ENCODE measurements at regions of chr1 and their contacts with region 1.

Region 1: DNA sequence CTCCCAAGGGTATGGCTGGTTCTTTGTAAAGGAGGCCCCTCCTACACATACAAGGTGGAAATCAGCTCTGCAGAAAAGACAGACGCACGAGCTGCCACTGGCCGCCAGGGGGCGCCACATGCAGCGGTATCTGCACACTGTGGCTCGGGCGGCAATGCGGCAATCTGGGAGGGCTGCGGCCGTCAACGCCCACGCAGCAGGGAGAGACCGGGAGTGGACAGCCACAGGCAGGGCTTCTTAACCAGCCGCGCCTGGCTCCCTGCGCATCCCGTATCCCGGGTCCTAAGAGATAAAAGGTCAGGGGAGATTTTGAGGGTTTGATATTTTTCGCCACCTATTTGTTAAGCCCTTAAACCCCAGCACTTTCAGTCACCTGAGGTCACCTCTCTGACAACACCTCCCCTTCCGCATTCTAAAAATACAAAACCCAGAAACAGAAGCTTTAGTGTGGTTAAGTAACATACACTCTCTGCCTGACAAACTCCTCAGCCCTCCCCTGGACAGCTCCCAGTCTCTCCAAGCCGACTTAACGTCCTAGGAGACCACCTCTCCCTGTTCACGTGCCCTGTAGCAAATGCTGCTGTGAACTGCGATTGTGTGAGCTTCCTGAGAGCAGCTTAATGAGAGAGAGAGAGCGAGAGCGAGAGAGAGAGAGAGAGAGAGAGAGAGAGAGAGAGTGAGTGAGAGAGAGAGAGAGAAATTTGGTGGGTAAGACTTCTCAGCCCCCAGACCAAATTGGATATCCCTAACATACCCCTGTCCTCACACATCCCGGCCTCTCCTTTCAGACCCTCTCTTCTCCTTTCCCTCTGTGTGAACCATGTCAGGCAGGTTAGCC is 13.5 kb upstream of the KCNA2 start:
- DNase-seq: peak; percentile 54
- ATAC-seq: peak; percentile 94
- H3K4me3 ChIP-seq: no peak overlapping the region
- H3K27ac ChIP-seq: no peak overlapping the region
- H3K4me1 ChIP-seq: no peaks in the 10 kb centered on the region
- H3K27me3 ChIP-seq: peaks cover 0 to 17% of the 10 kb centered on the region in 2 experiments; a peak in 3 of 5 replicates
- CTCF ChIP-seq: peak; percentile 89
- EP300 ChIP-seq: no peak
- POLR2A ChIP-seq: no peak
- RAD21 ChIP-seq: peak; percentile 45; the same call in 1 of the 2 replicates

Region 2: GRCh38 chr1:110524311-110525251 is 95.0 kb before region 1 on chr1:
- CTCF ChIA-PET with region 1: interaction called, 8 read pairs
- POLR2A ChIA-PET with region 1: no interaction called
- in situ Hi-C with region 1: no loop called
- intact Hi-C with region 1: loop called (anchors 10 kb)
- DNase-seq: peak; percentile 21
- ATAC-seq: peak; percentile 87
- H3K4me3 ChIP-seq: no peak overlapping the region; a peak in 1 of 6 replicates
- H3K27ac ChIP-seq: no peak overlapping the region
- H3K4me1 ChIP-seq: no peaks in the 10 kb centered on the region
- H3K27me3 ChIP-seq: no peaks in the 10 kb centered on the region; a peak in 1 of 5 replicates
- CTCF ChIP-seq: peak; percentile 80
- EP300 ChIP-seq: no peak
- POLR2A ChIP-seq: no peak
- RAD21 ChIP-seq: peak; percentile 38

Region 3: GRCh38 chr1:110554871-110555801 is 64.5 kb before region 1 on chr1:
- CTCF ChIA-PET with region 1: interaction called, 15 read pairs
- POLR2A ChIA-PET with region 1: no interaction called
- in situ Hi-C with region 1: loop called (anchors 5 kb)
- intact Hi-C with region 1: loop called (anchors 1 kb)
- DNase-seq: peak; percentile 11
- ATAC-seq: peak; percentile 95
- H3K4me3 ChIP-seq: peak overlapping the region in 2 of 3 experiments; percentile 28 to 61; a peak in 2 of 6 replicates
- H3K27ac ChIP-seq: no peak overlapping the region
- H3K4me1 ChIP-seq: no peaks in the 10 kb centered on the region
- H3K27me3 ChIP-seq: peaks cover 4 to 25% of the 10 kb centered on the region in 2 experiments; a peak in 4 of 5 replicates
- CTCF ChIP-seq: peak; percentile 76
- EP300 ChIP-seq: no peak
- POLR2A ChIP-seq: no peak
- RAD21 ChIP-seq: peak; percentile 63

Region 4: DNA sequence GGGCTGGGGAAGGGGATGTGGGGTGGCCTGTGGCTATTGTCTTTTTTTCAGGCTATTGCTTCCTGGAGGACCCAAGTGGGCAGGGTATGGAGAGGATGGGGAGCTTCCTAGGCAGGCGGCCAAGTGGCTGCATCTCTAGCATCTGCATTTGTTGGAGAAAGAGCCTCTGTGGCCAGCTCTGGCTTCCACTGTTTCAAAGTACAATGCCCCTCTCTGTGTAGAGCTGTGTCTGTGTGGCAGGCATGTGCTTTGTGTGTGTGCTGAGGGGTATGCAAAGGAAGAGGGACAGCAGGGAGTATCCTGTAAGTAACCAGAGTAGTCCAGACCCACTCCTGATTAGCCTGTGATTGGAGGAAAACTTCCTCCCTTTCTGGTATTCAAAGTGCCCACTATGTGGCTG is 54.1 kb before region 1 on chr1:
- CTCF ChIA-PET with region 1: no interaction called
- POLR2A ChIA-PET with region 1: no interaction called
- in situ Hi-C with region 1: no loop called
- intact Hi-C with region 1: no loop called
- DNase-seq: no peak
- ATAC-seq: no peak
- H3K4me3 ChIP-seq: no peak overlapping the region
- H3K27ac ChIP-seq: no peak overlapping the region
- H3K4me1 ChIP-seq: no peaks in the 10 kb centered on the region
- H3K27me3 ChIP-seq: peaks cover 2 to 15% of the 10 kb centered on the region in 2 experiments; a peak in 3 of 5 replicates
- CTCF ChIP-seq: no peak
- EP300 ChIP-seq: no peak
- POLR2A ChIP-seq: no peak
- RAD21 ChIP-seq: no peak

Region 5: GRCh38 chr1:110645821-110646735 is 26.4 kb after region 1 on chr1:
- CTCF ChIA-PET with region 1: no interaction called
- POLR2A ChIA-PET with region 1: no interaction called
- in situ Hi-C with region 1: no loop called
- intact Hi-C with region 1: no loop called
- DNase-seq: no peak
- ATAC-seq: no peak
- H3K4me3 ChIP-seq: no peak overlapping the region
- H3K27ac ChIP-seq: no peak overlapping the region
- H3K4me1 ChIP-seq: no peaks in the 10 kb centered on the region
- H3K27me3 ChIP-seq: no peaks in the 10 kb centered on the region
- CTCF ChIP-seq: no peak
- EP300 ChIP-seq: no peak
- POLR2A ChIP-seq: no peak
- RAD21 ChIP-seq: no peak

Region 6: GRCh38 chr1:110674337-110675059 is 54.9 kb after region 1 on chr1 and contains the start of gene KCNA3:
- CTCF ChIA-PET with region 1: no interaction called
- POLR2A ChIA-PET with region 1: no interaction called
- in situ Hi-C with region 1: no loop called
- intact Hi-C with region 1: no loop called
- DNase-seq: no peak
- ATAC-seq: no peak
- H3K4me3 ChIP-seq: peak within 1 kb of the TSS in 1 of 3 experiments; percentile 40; a peak in 1 of 6 replicates
- H3K27ac ChIP-seq: no peak within 1 kb of the TSS
- H3K4me1 ChIP-seq: no peaks in the 10 kb centered on the region
- H3K27me3 ChIP-seq: peaks cover 0 to 11% of the 10 kb centered on the region in 2 experiments; a peak in 3 of 5 replicates
- CTCF ChIP-seq: no peak
- EP300 ChIP-seq: no peak
- POLR2A ChIP-seq: no peak
- RAD21 ChIP-seq: no peak
- total RNA-seq, gene KCNA3: not detected in 2 replicates

Region 7: GRCh38 chr1:110780600-110781484 is 161.2 kb after region 1 on chr1:
- CTCF ChIA-PET with region 1: interaction called, 6 read pairs
- POLR2A ChIA-PET with region 1: no interaction called
- in situ Hi-C with region 1: no loop called
- intact Hi-C with region 1: loop called (anchors 5 kb)
- DNase-seq: peak; percentile 40
- ATAC-seq: peak; percentile 58; the same call in 2 of the 3 replicates
- H3K4me3 ChIP-seq: no peak overlapping the region
- H3K27ac ChIP-seq: no peak overlapping the region
- H3K4me1 ChIP-seq: no peaks in the 10 kb centered on the region
- H3K27me3 ChIP-seq: 0 out of 5 replicates have a peak, but pooled peaks cover 0 to 1% of the 10 kb centered on the region in 2 experiments
- CTCF ChIP-seq: peak; percentile 78
- EP300 ChIP-seq: no peak
- POLR2A ChIP-seq: no peak
- RAD21 ChIP-seq: 0 out of 2 replicates have a peak, but pooled peaks have one; percentile 15

Measured in HepG2 (cell line).